Adrenal gland (tissue), 19 donors: ENCODE measurements at regions of chr17 and their contacts with region 1.

Region 1: DNA sequence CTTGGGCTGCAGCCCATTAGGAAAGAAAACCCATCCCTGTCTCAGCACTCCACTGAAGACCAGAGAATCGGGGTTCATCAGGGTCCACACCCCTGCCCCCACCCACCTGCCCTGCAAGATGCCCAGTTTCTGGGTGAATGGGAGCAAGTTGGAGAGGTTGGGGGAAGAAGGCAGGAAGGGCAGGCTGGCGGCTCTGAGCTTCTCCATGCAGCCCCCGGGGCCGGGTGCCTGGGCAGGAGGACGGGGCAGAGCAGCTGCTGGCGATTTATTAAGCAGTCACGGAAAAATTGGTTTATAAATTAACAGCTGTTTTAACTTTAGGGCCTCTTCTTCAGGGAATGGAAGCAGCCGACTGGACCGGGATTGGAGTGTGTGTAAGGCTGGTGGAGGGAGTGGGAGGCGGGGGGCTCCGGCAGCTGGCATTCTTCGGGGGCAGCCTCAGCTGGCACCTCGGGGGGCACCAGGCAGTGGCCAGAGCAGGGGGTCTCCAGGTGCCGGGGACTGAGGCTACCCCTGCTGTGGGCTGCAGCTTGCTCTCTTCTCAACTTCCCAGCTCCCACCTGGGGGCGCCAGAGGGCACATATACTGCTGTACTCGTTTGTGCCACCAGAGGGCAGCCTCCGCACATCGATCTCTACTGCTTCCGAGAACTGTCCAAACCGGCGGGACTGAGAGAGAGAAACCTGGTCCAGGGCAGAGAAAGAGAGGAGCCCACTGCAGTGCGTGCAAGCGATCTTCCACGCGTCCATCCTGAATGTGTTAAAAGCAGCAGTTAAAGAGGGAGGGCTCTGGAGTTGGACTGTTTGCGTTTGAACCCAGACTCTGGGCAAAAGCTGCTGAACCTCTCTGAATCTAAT is 5.0 kb upstream of the PPP1R1B start:
- DNase-seq: peak; percentile 76 to 97 (median 89)
- H3K4me3 ChIP-seq: no peak overlapping the region
- H3K27ac ChIP-seq: peak overlapping the region in 1 of 5 donors; percentile 12
- H3K4me1 ChIP-seq: peaks cover 8 to 14% of the 10 kb centered on the region in 2 donors
- H3K27me3 ChIP-seq: peaks cover 7% of the 10 kb centered on the region
- CTCF ChIP-seq: peak; percentile 96 to 100 (median 100)
- POLR2A ChIP-seq: no peak

Region 2: GRCh38 chr17:39547713-39548478 is 73.9 kb before region 1 on chr17:
- intact Hi-C with region 1: loop called (anchors 2 kb)
- DNase-seq: peak in 6 of 7 donors; percentile 53 to 89 (median 73)
- H3K4me3 ChIP-seq: no peak overlapping the region
- H3K27ac ChIP-seq: no peak overlapping the region
- H3K4me1 ChIP-seq: no peaks in the 10 kb centered on the region
- H3K27me3 ChIP-seq: no peaks in the 10 kb centered on the region
- CTCF ChIP-seq: peak; percentile 87 to 96 (median 90)
- POLR2A ChIP-seq: no peak

Region 3: DNA sequence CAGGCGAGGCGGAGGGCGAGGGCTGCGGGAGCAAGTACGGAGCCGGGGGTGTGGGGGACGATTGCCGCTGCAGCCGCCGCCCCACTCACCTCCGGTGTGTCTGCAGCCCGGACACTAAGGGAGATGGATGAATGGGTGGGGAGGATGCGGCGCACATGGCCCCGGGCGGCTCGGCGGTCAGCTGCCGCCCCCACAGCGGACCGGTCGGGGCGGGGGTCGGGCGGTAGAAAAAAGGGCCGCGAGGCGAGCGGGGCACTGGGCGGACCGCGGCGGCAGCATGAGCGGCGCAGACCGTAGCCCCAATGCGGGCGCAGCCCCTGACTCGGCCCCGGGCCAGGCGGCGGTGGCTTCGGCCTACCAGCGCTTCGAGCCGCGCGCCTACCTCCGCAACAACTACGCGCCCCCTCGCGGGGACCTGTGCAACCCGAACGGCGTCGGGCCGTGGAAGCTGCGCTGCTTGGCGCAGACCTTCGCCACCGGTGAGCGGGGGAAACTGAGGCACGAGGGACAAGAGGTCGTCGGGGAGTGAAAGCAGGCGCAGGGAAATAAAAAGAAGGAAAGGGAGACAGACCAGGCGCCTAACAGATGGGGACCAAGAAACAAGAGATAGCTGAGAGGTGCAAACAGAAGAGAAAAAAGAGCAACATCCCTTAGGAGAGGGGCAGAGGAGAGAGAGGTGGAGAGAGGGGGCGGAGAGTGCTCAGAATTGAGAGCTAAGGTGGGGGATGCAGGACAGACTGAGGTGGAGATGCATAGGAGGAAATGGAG is 46.6 kb after region 1 on chr17 and contains the start of gene PNMT:
- intact Hi-C with region 1: loop called in 1 of 2 experiments (anchors 2 kb)
- DNase-seq: peak; percentile 47 to 84 (median 71)
- H3K4me3 ChIP-seq: peak within 1 kb of the TSS in 1 of 4 donors; percentile 47
- H3K27ac ChIP-seq: peak within 1 kb of the TSS in 1 of 5 donors; percentile 74
- H3K4me1 ChIP-seq: peaks cover 19 to 30% of the 10 kb centered on the region in 2 donors
- H3K27me3 ChIP-seq: peaks cover 23% of the 10 kb centered on the region
- CTCF ChIP-seq: peak; percentile 20 to 65 (median 56)
- POLR2A ChIP-seq: no peak
- total RNA-seq, gene PNMT: 0.47 to 366 (median 8.4) TPM in 8 of 9 donors, not detected in the other

Region 4: GRCh38 chr17:39754161-39754951 is 132.6 kb after region 1 on chr17:
- intact Hi-C with region 1: loop called (anchors 2 to 5 kb)
- DNase-seq: peak; percentile 91 to 94 (median 93)
- H3K4me3 ChIP-seq: peak overlapping the region; percentile 7 to 73 (median 63)
- H3K27ac ChIP-seq: peak overlapping the region; percentile 52 to 91 (median 79)
- H3K4me1 ChIP-seq: peaks cover 8 to 15% of the 10 kb centered on the region in 2 donors
- H3K27me3 ChIP-seq: no peaks in the 10 kb centered on the region
- CTCF ChIP-seq: peak; percentile 63 to 99 (median 94)
- POLR2A ChIP-seq: peak; percentile 36 to 70

Region 5: GRCh38 chr17:40150276-40150675 is 528.5 kb after region 1 on chr17:
- intact Hi-C with region 1: no loop called
- DNase-seq: peak in 2 of 7 donors; percentile 50 to 51
- H3K4me3 ChIP-seq: no peak overlapping the region
- H3K27ac ChIP-seq: peak overlapping the region in 2 of 5 donors; percentile 8 to 15
- H3K4me1 ChIP-seq: peaks cover 5 to 15% of the 10 kb centered on the region in 2 donors
- H3K27me3 ChIP-seq: no peaks in the 10 kb centered on the region
- CTCF ChIP-seq: no peak
- POLR2A ChIP-seq: no peak

Region 6: DNA sequence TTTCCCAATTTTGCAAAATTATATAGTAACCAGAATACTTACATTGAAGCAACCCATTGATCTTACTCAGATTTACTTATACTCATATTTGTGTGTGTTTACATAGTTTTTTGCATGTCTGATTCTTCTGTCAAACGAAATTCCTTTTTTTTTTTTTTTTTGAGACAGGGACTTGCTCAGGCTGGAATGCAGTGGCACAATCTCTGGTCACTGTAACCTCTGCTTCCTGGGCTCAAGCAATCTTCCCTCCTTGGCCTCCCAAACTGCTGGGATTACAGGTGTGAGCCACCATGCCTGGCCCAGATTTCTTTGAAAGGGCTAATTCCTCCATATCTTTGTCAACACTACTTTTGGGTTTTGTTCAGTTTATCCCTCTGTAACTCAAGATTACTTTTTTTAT is 765.9 kb after region 1 on chr17:
- intact Hi-C with region 1: no loop called
- DNase-seq: no peak
- H3K4me3 ChIP-seq: no peak overlapping the region
- H3K27ac ChIP-seq: no peak overlapping the region
- H3K4me1 ChIP-seq: no peaks in the 10 kb centered on the region
- H3K27me3 ChIP-seq: no peaks in the 10 kb centered on the region
- CTCF ChIP-seq: no peak
- POLR2A ChIP-seq: no peak